ENCODE measurements at regions of chr7 and their contacts with region 1.

Region 1: DNA sequence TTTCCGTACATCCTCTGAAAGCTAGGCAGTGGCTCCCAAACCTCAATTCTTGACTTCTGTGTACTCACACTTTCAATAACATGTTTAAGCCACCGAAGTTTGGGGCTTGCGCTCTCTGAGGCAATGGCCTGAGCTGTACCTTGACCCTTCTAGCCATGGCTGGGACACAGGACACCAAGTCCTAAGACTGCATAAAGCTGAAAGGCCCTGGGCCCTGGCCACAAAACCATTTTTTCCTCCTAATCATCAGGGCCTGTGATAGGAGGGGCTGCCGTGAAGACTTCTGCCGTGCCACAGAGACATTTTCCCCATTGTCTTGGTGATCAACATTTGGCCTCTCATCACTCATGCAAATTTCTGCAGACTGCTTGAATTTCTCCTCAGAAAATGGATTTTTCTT is 216.5 kb upstream of the TEX47 start:
- DNase-seq: no peak
- ATAC-seq: no peak
- H3K4me3 ChIP-seq: no peak overlapping the region
- H3K27ac ChIP-seq: no peak overlapping the region
- H3K4me1 ChIP-seq: no peaks in the 10 kb centered on the region
- H3K27me3 ChIP-seq: no peaks in the 10 kb centered on the region
- CTCF ChIP-seq: no peak

Region 2: DNA sequence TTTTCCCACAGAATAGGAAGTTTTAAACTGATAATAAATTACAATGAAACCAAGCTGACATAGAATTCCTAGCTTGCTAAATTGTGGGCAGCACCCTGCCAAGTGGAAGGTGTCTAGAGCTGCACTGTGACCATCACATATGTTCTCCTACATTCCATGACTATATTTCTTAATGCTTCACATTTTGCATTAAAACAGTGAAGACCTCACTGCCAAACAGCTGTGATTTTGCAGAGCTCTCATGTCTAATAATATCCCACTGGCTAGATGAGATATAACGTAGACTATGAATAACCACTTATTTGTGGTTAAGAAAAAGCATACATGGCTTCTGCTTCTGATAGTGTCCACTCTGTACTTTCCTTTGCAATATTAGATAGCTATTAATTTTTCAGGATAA is 11.9 kb after region 1 on chr7:
- CTCF ChIA-PET with region 1: no interaction called
- POLR2A ChIA-PET with region 1: interaction called, 10 read pairs
- in situ Hi-C with region 1: no loop called
- intact Hi-C with region 1: no loop called
- DNase-seq: no peak
- ATAC-seq: no peak
- H3K4me3 ChIP-seq: no peak overlapping the region
- H3K27ac ChIP-seq: no peak overlapping the region
- H3K4me1 ChIP-seq: no peaks in the 10 kb centered on the region
- H3K27me3 ChIP-seq: no peaks in the 10 kb centered on the region
- CTCF ChIP-seq: no peak

Region 3: GRCh38 chr7:89042940-89043339 is 30.9 kb after region 1 on chr7:
- CTCF ChIA-PET with region 1: no interaction called
- POLR2A ChIA-PET with region 1: no interaction called
- in situ Hi-C with region 1: no loop called
- intact Hi-C with region 1: no loop called
- DNase-seq: no peak
- ATAC-seq: no peak
- H3K4me3 ChIP-seq: no peak overlapping the region
- H3K27ac ChIP-seq: no peak overlapping the region
- H3K4me1 ChIP-seq: no peaks in the 10 kb centered on the region
- H3K27me3 ChIP-seq: no peaks in the 10 kb centered on the region
- CTCF ChIP-seq: no peak